ENCODE measurements at regions of chr14 and their contacts with region 1.

Region 1: GRCh38 chr14:77390188-77390587 is 13.0 kb downstream of the SAMD15 start:
- DNase-seq: no peak
- H3K4me3 ChIP-seq: no peak overlapping the region
- H3K27ac ChIP-seq: no peak overlapping the region
- H3K4me1 ChIP-seq: no peaks in the 10 kb centered on the region
- CTCF ChIP-seq: no peak

Region 2: GRCh38 chr14:77436042-77436441 is 45.9 kb after region 1 on chr14:
- CTCF ChIA-PET with region 1: no interaction called
- POLR2A ChIA-PET with region 1: no interaction called
- intact Hi-C with region 1: loop called (anchors 5 kb)
- DNase-seq: no peak
- H3K4me3 ChIP-seq: no peak overlapping the region
- H3K27ac ChIP-seq: no peak overlapping the region
- H3K4me1 ChIP-seq: no peaks in the 10 kb centered on the region
- CTCF ChIP-seq: no peak

Region 3: GRCh38 chr14:77478796-77479195 is 88.6 kb after region 1 on chr14:
- CTCF ChIA-PET with region 1: no interaction called
- POLR2A ChIA-PET with region 1: no interaction called
- intact Hi-C with region 1: no loop called
- DNase-seq: peak; percentile 31
- H3K4me3 ChIP-seq: no peak overlapping the region
- H3K27ac ChIP-seq: no peak overlapping the region
- H3K4me1 ChIP-seq: peaks cover 4% of the 10 kb centered on the region
- CTCF ChIP-seq: no peak

Measured in OCI-LY7 (cell line).